Mammary epithelial cell (primary cell): ENCODE measurements at regions of chr22 and their contacts with region 1.

Region 1: GRCh38 chr22:24707470-24707801 is 67.1 kb downstream of the PIWIL3 start:
- DNase-seq: no peak
- H3K4me3 ChIP-seq: no peak overlapping the region
- H3K27ac ChIP-seq: no peak overlapping the region
- H3K4me1 ChIP-seq: no peaks in the 10 kb centered on the region
- H3K27me3 ChIP-seq: peaks cover 2% of the 10 kb centered on the region
- CTCF ChIP-seq: peak in 1 of 2 donors; percentile 30

Region 2: DNA sequence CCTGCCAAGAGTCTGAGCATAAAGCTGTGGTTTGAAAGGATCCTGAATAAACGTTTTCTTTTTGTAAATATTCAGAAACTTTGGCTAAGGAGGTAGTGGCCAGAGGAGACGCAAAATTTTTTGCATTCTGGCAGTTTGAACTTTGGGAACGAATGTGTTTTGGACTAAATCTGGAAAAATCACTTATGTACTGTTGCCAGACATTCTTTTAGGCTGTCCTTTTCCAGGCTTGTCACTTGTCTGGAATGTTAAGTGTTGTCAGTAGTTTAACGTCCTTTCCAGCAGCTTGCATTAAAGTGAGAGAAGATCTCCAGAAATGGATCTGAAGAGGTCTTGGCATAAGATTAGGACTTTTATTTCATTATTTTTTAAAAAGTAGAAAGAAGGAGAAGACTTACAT is 418.3 kb before region 1 on chr22:
- CTCF ChIA-PET with region 1: no interaction called
- dilution Hi-C with region 1: no loop called
- in situ Hi-C with region 1: no loop called
- intact Hi-C with region 1: no loop called
- DNase-seq: no peak
- H3K4me3 ChIP-seq: no peak overlapping the region
- H3K27ac ChIP-seq: peak overlapping the region; percentile 2
- H3K4me1 ChIP-seq: peaks cover 26% of the 10 kb centered on the region
- H3K27me3 ChIP-seq: no peaks in the 10 kb centered on the region
- CTCF ChIP-seq: no peak

Region 3: DNA sequence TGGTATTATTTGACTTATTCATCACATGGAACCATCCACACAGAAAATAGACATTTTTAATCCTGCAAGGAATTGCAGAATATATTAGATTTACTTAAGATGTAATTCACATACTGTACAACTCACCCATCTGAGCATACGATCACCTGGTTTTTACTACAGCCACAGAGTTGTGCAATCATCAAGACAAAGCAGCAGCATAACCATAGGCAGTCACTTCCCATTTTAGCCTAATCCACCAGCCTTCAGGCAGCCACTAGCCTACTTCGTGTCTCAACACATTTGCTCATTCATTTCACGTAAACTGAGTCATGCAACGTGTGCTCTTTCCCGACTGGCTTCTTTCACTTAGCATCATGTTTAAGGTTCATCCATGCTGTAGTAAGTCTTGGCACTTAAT is 44.1 kb after region 1 on chr22:
- CTCF ChIA-PET with region 1: no interaction called
- dilution Hi-C with region 1: loop called (anchors 5 kb)
- in situ Hi-C with region 1: no loop called
- intact Hi-C with region 1: no loop called
- DNase-seq: peak; percentile 55
- H3K4me3 ChIP-seq: no peak overlapping the region
- H3K27ac ChIP-seq: no peak overlapping the region
- H3K4me1 ChIP-seq: no peaks in the 10 kb centered on the region
- H3K27me3 ChIP-seq: peaks cover 5% of the 10 kb centered on the region
- CTCF ChIP-seq: no peak